Posterior vena cava (tissue), 2 donors: ENCODE measurements at regions of chr1 and their contacts with region 1.

Region 1: GRCh38 chr1:3410142-3410925 is 44.1 kb upstream of the ARHGEF16 start:
- DNase-seq: peak; percentile 91

Region 2: GRCh38 chr1:3004285-3005205 is 405.8 kb before region 1 on chr1:
- intact Hi-C with region 1: loop called in 1 of 2 experiments (anchors 5 kb)
- DNase-seq: peak; percentile 64

Region 3: GRCh38 chr1:3012456-3013291 is 397.7 kb before region 1 on chr1:
- intact Hi-C with region 1: loop called (anchors 5 kb)
- DNase-seq: peak; percentile 85

Region 4: GRCh38 chr1:3069491-3070303 is 340.6 kb before region 1 on chr1:
- intact Hi-C with region 1: loop called (anchors 5 to 10 kb)
- DNase-seq: peak; percentile 78

Region 5: GRCh38 chr1:3352299-3352951 is 57.9 kb before region 1 on chr1:
- intact Hi-C with region 1: loop called in 1 of 2 experiments (anchors 5 kb)
- DNase-seq: peak; percentile 91

Region 6: DNA sequence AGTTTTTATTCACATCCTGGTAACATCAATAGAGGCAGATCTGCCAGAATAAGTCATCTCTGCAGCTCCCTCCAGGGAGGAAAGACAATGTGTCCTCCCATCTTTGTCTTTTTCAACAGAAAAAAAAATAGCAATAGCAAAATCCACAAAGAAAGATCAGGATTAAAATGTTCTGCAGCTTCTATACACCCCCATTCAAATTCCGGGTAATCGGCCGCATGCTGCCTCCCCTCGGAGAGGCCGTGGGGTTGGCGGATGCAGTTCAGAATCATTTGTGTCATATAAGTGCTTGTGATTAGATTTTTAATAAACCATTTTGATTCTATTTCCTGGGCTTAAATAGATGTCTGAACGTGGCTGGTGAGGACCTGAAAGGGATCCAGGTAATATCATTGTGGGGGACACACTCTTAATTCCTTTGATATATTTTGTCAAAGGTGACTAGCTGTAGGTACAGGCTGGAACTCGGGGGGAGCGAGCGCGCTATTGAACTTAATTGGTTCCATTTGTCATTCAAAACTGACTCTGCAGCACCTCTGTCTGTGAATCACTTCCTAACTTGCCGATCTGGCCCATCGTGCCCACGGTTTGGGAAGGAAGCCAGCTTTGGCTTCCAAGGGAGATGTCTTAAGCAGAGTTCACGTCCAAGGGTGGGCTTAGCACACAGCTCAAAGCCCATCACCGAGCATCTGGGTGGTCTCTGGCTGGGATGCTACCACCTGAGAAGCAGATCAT is 41.5 kb before region 1 on chr1:
- intact Hi-C with region 1: loop called in 1 of 2 experiments (anchors 1 kb)
- DNase-seq: no peak